CD4-positive, alpha-beta memory T cell (primary cell): ENCODE measurements at regions of chr2 and their contacts with region 1.

Region 1: GRCh38 chr2:9782197-9782719 is 61.0 kb upstream of the TAF1B start:
- DNase-seq: peak; percentile 82 to 94 (median 87)
- H3K4me3 ChIP-seq: peak overlapping the region; percentile 2 to 19
- H3K4me3 Mint-ChIP-seq: peak overlapping the region; percentile 64 to 78 (median 72)
- H3K27ac ChIP-seq: peak overlapping the region; percentile 89
- H3K27ac Mint-ChIP-seq: peak overlapping the region; percentile 95 to 100 (median 99)
- H3K4me1 ChIP-seq: peaks cover 58% of the 10 kb centered on the region
- H3K4me1 Mint-ChIP-seq: peaks cover 38 to 79% (median 60%) of the 10 kb centered on the region in 4 donors
- H3K27me3 ChIP-seq: no peaks in the 10 kb centered on the region
- H3K27me3 Mint-ChIP-seq: no peaks in the 10 kb centered on the region

Region 2: GRCh38 chr2:9423100-9423921 is 358.9 kb before region 1 on chr2 and contains the starts of genes CPSF3 and ITGB1BP1:
- CTCF ChIA-PET with region 1: no interaction called
- POLR2A ChIA-PET with region 1: interaction called, 8 read pairs
- intact Hi-C with region 1: loop called (anchors 1 kb)
- DNase-seq: peak; percentile 93 to 95 (median 94)
- H3K4me3 ChIP-seq: peak within 1 kb of the TSS; percentile 77 to 97
- H3K4me3 Mint-ChIP-seq: peak within 1 kb of the TSS in 5 of 8 donors; percentile 91 to 93 (median 91)
- H3K27ac ChIP-seq: peak within 1 kb of the TSS; percentile 88
- H3K27ac Mint-ChIP-seq: peak within 1 kb of the TSS in 6 of 7 donors; percentile 85 to 95 (median 94)
- H3K4me1 ChIP-seq: peaks cover 43% of the 10 kb centered on the region
- H3K4me1 Mint-ChIP-seq: peaks cover 24 to 30% (median 28%) of the 10 kb centered on the region in 4 donors
- H3K27me3 ChIP-seq: no peaks in the 10 kb centered on the region
- H3K27me3 Mint-ChIP-seq: no peaks in the 10 kb centered on the region
- total RNA-seq, gene CPSF3: 20.9 to 22.4 TPM
- total RNA-seq, gene ITGB1BP1: 55.1 to 55.8 TPM

Region 3: DNA sequence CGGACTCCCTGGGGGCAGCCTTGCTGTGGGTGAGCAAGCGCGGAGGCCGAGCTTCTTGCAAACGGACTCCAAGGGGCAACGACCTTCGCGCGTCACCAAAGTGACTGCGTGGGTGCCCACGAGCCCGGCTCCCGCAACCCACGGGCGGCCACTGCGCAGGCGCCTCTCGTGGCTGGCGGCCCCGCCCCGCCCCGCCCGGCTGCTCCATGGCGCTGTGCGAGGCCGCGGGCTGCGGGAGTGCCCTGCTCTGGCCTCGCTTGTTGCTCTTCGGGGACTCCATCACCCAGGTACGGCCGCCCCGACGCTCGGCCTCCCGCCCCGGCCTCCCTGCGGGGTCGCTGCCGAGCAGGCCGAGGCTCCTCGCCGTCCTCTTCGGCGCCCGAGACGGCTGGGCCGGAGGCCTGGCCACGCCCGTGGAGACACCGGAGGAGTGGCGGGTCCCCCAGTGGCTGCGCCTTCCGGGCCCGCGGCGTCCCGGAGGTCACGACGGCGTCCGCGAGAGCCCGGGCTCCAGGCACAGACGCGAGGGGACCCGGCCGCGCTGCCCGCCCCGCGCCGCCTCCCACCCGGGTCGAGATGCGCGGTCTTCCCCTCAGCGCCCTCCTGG is 307.8 kb before region 1 on chr2 and contains the start of gene IAH1:
- CTCF ChIA-PET with region 1: interaction called, 4 read pairs
- POLR2A ChIA-PET with region 1: interaction called, 7 read pairs
- intact Hi-C with region 1: loop called (anchors 1 kb)
- DNase-seq: peak; percentile 78 to 82 (median 80)
- H3K4me3 ChIP-seq: peak within 1 kb of the TSS; percentile 11 to 86
- H3K4me3 Mint-ChIP-seq: peak within 1 kb of the TSS; percentile 83 to 91 (median 86)
- H3K27ac ChIP-seq: peak within 1 kb of the TSS; percentile 83
- H3K27ac Mint-ChIP-seq: peak within 1 kb of the TSS; percentile 80 to 95 (median 94)
- H3K4me1 ChIP-seq: peaks cover 52% of the 10 kb centered on the region
- H3K4me1 Mint-ChIP-seq: peaks cover 28 to 59% (median 45%) of the 10 kb centered on the region in 4 donors
- H3K27me3 ChIP-seq: no peaks in the 10 kb centered on the region
- H3K27me3 Mint-ChIP-seq: no peaks in the 10 kb centered on the region
- total RNA-seq, gene IAH1: 52.5 to 58.1 TPM

Region 4: GRCh38 chr2:9739531-9739964 is 42.7 kb before region 1 on chr2:
- CTCF ChIA-PET with region 1: interaction called, 5 read pairs
- POLR2A ChIA-PET with region 1: interaction called, 7 read pairs
- intact Hi-C with region 1: loop called (anchors 5 kb)
- DNase-seq: peak; percentile 48 to 70 (median 54)
- H3K4me3 ChIP-seq: peak overlapping the region in 1 of 2 donors; percentile 27
- H3K4me3 Mint-ChIP-seq: peak overlapping the region; percentile 73 to 97 (median 87)
- H3K27ac ChIP-seq: peak overlapping the region; percentile 62
- H3K27ac Mint-ChIP-seq: peak overlapping the region; percentile 87 to 99 (median 96)
- H3K4me1 ChIP-seq: peaks cover 49% of the 10 kb centered on the region
- H3K4me1 Mint-ChIP-seq: peaks cover 34 to 70% (median 48%) of the 10 kb centered on the region in 4 donors
- H3K27me3 ChIP-seq: no peaks in the 10 kb centered on the region
- H3K27me3 Mint-ChIP-seq: no peaks in the 10 kb centered on the region

Region 5: GRCh38 chr2:9753276-9753600 is 29.0 kb before region 1 on chr2:
- CTCF ChIA-PET with region 1: interaction called, 5 read pairs
- POLR2A ChIA-PET with region 1: interaction called, 9 read pairs
- intact Hi-C with region 1: loop called (anchors 2 kb)
- DNase-seq: peak in 4 of 5 donors; percentile 35 to 79 (median 48)
- H3K4me3 ChIP-seq: peak overlapping the region in 1 of 2 donors; percentile 52
- H3K4me3 Mint-ChIP-seq: peak overlapping the region; percentile 80 to 96 (median 94)
- H3K27ac ChIP-seq: peak overlapping the region; percentile 53
- H3K27ac Mint-ChIP-seq: peak overlapping the region; percentile 90 to 100 (median 99)
- H3K4me1 ChIP-seq: peaks cover 49% of the 10 kb centered on the region
- H3K4me1 Mint-ChIP-seq: peaks cover 29 to 72% (median 50%) of the 10 kb centered on the region in 4 donors
- H3K27me3 ChIP-seq: no peaks in the 10 kb centered on the region
- H3K27me3 Mint-ChIP-seq: no peaks in the 10 kb centered on the region

Region 6: DNA sequence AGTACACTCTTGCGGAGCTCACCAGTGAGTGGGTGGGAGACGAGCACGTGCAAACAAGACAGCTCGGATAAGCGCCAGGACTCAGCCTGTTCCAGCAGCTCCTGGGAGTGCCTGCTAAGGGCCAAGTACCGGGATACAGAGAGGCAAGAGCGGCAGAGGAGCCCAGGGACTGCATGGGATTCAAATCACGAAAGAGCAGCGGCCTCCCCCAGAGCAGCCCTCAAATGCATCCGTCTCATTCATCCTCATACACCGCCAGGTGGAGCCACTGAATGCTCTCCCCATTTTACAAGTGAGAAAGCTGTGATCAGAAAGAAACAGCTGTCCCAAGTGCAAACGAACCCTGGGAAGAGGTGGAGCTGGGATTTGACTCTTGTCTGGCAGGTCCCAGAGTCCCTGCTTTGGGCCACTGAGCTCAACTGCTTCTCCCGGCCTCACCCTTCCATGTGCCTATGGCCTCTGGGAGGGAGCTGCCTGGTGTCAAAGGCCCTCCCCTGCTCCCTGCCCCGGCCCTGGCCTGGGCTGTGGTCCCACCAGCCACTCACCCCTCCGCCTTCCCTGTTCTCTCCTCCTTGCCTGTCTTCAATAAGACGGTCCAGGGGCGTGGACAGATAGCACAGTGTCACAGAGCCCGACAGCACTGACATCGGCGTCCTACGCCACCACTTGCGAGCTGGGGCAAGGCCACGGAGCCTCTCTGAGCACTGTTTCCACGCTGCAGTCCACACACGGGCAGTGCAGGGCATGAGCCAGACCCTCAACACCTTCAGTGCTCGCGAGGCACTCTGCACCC is 11.8 kb before region 1 on chr2:
- CTCF ChIA-PET with region 1: interaction called, 24 read pairs
- POLR2A ChIA-PET with region 1: interaction called, 9 read pairs
- intact Hi-C with region 1: loop called (anchors 1 kb)
- DNase-seq: peak; percentile 49 to 63 (median 58)
- H3K4me3 ChIP-seq: no peak overlapping the region
- H3K4me3 Mint-ChIP-seq: peak overlapping the region in 1 of 8 donors; percentile 55
- H3K27ac ChIP-seq: no peak overlapping the region
- H3K27ac Mint-ChIP-seq: peak overlapping the region in 5 of 7 donors; percentile 15 to 88 (median 46)
- H3K4me1 ChIP-seq: peaks cover 20% of the 10 kb centered on the region
- H3K4me1 Mint-ChIP-seq: peaks cover 3 to 21% (median 13%) of the 10 kb centered on the region in 4 donors
- H3K27me3 ChIP-seq: no peaks in the 10 kb centered on the region
- H3K27me3 Mint-ChIP-seq: no peaks in the 10 kb centered on the region

Region 7: DNA sequence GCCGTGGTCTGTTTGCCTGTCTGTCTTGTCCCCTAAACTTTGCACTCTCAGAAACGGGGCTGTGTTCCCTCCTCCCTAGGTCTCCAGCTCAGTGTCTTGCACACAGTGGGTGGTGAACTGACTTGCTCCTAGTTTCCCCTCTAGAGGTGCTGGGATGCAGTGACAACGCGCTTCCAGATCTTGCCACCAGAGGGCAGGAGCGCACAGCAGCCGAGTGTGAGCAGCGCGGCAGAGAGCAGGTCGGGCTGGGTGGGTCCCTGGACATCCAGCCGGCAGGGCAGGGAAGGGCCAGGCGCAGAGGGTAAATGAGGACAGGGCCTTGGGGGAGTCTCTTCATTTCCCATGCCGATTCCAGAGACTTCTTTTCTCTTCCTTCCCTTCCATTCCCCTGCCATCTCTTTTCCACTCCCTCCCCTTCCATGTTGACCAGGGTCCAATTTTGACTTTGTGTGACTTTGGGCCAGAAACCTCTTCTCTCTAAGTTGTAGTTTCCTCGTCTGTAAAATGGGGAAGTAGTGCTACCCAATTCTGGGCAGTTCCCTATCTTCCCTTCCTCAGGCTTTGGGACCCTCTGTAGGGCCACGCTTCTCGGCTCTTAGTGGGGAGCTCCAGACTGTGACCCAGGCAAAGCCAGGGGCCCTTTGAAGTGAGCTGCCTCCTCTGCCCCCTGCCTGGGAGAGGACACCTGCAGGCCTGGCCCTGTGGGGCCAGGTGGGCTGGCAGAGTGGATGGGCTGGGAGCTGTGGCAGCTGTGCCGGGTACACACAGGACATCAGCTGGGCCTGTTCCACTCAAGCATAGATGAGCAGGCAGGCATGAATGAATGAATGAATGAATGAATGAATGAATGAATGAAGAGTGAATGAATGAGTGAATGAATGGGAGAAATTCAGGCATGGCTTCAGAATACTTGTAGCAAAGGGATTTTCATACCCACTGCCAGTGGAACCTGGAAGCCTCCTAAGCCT is 17.7 kb after region 1 on chr2:
- CTCF ChIA-PET with region 1: interaction called, 52 read pairs
- POLR2A ChIA-PET with region 1: interaction called, 5 read pairs
- intact Hi-C with region 1: loop called (anchors 1 kb)
- DNase-seq: peak; percentile 76 to 84 (median 79)
- H3K4me3 ChIP-seq: peak overlapping the region in 1 of 2 donors; percentile 21
- H3K4me3 Mint-ChIP-seq: peak overlapping the region; percentile 71 to 96 (median 89)
- H3K27ac ChIP-seq: peak overlapping the region; percentile 75
- H3K27ac Mint-ChIP-seq: peak overlapping the region; percentile 92 to 98 (median 93)
- H3K4me1 ChIP-seq: peaks cover 36% of the 10 kb centered on the region
- H3K4me1 Mint-ChIP-seq: peaks cover 21 to 48% (median 33%) of the 10 kb centered on the region in 4 donors
- H3K27me3 ChIP-seq: no peaks in the 10 kb centered on the region
- H3K27me3 Mint-ChIP-seq: no peaks in the 10 kb centered on the region

Region 8: DNA sequence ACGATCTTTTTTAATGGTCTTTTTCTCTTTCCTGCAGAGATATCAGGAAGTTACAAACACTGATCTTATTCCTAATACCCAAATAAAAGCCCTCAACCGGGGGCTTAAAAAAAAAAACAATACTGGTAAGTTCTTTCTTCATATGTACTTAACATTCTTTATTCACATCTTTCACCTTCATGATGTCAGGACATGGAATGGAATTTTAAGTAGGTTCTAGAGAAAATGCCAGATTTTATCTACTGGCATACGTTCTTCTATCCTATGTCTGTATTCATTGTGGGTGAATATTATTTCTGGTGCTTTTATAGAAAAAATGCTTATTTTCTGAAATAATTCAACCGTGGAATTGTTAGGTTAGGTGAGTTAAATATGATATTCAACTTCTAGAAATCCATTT is 67.1 kb after region 1 on chr2:
- CTCF ChIA-PET with region 1: no interaction called
- POLR2A ChIA-PET with region 1: no interaction called
- intact Hi-C with region 1: no loop called
- DNase-seq: no peak
- H3K4me3 ChIP-seq: no peak overlapping the region
- H3K4me3 Mint-ChIP-seq: no peak overlapping the region
- H3K27ac ChIP-seq: no peak overlapping the region
- H3K27ac Mint-ChIP-seq: no peak overlapping the region
- H3K4me1 ChIP-seq: peaks cover 27% of the 10 kb centered on the region
- H3K4me1 Mint-ChIP-seq: peaks cover 23 to 43% (median 30%) of the 10 kb centered on the region in 4 donors
- H3K27me3 ChIP-seq: no peaks in the 10 kb centered on the region
- H3K27me3 Mint-ChIP-seq: no peaks in the 10 kb centered on the region